Naive thymus-derived CD4-positive, alpha-beta T cell (primary cell): ENCODE measurements at regions of chr11 and their contacts with region 1.

Region 1: DNA sequence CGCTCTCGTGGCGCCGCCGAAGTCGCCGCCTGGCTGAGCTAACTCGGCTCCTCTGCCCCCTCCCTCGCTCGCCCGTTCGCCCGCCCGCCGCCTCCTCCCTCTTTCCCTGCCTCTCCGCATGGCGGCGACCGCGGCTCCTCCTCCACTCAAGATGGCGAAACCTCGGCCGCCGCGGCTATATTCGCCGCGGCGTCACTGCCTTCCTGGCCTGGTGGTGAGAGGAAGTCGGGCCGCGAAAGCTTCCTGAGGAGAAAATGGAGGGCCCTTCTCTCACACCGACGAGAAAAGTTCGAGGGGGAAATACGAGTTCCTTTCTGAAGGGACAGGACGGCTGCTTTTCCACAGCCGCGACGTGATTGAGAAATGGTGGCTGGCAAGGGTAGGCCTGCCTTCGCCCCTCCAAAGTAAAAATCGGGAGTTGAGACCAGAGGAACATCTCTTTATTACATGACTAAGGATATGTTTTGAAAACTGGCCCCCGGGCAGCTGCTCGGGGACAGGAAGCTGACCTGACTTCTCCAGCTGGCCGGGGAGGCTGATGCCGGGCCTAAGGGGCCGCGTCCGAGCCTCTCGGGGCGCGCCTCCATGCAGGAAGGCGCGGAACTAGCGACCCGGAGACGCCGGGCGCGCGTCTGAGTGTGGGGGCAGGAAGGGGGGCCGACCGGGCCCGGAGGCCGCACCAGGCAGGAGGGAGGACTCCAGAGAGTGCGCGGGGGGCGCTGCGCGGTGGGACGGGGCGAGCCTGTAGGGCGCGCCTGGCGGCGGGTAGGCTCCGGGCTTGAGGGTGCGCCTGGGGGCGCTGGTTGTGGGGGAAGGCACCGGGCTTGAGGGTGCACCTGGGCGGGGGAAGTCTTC is at the start of gene DDX6:
- DNase-seq: peak; percentile 84 to 92 (median 89)
- ATAC-seq: peak; percentile 79
- H3K4me3 ChIP-seq: peak within 1 kb of the TSS; percentile 78
- H3K4me3 Mint-ChIP-seq: peak within 1 kb of the TSS; percentile 92 to 100 (median 98)
- H3K27ac ChIP-seq: peak within 1 kb of the TSS; percentile 99
- H3K27ac Mint-ChIP-seq: peak within 1 kb of the TSS; percentile 95 to 100 (median 99)
- H3K4me1 ChIP-seq: peaks cover 15 to 24% of the 10 kb centered on the region in 2 donors
- H3K4me1 Mint-ChIP-seq: peaks cover 20 to 38% (median 28%) of the 10 kb centered on the region in 7 donors
- H3K27me3 ChIP-seq: no peaks in the 10 kb centered on the region
- H3K27me3 Mint-ChIP-seq: no peaks in the 10 kb centered on the region
- total RNA-seq, gene DDX6: 154 to 346 (median 272) TPM

Region 2: GRCh38 chr11:118401151-118401878 is 390.0 kb before region 1 on chr11 and contains the start of gene ATP5MG:
- CTCF ChIA-PET with region 1: no interaction called
- POLR2A ChIA-PET with region 1: no interaction called
- intact Hi-C with region 1: loop called in 1 of 2 experiments (anchors 2 kb)
- DNase-seq: peak; percentile 83 to 96 (median 93)
- ATAC-seq: peak; percentile 71
- H3K4me3 ChIP-seq: peak within 1 kb of the TSS; percentile 79
- H3K4me3 Mint-ChIP-seq: peak within 1 kb of the TSS; percentile 97 to 99 (median 98)
- H3K27ac ChIP-seq: peak within 1 kb of the TSS; percentile 97
- H3K27ac Mint-ChIP-seq: peak within 1 kb of the TSS; percentile 97 to 100 (median 100)
- H3K4me1 ChIP-seq: peaks cover 37 to 58% of the 10 kb centered on the region in 2 donors
- H3K4me1 Mint-ChIP-seq: peaks cover 39 to 78% (median 71%) of the 10 kb centered on the region in 7 donors
- H3K27me3 ChIP-seq: no peaks in the 10 kb centered on the region
- H3K27me3 Mint-ChIP-seq: peaks cover 0 to 2% (median 0%) of the 10 kb centered on the region in 5 donors
- total RNA-seq, gene ATP5MG: 140 to 241 (median 154) TPM

Region 3: GRCh38 chr11:118689851-118690552 is 101.3 kb before region 1 on chr11:
- CTCF ChIA-PET with region 1: interaction called, 47 read pairs
- POLR2A ChIA-PET with region 1: interaction called, 82 read pairs
- intact Hi-C with region 1: loop called (anchors 1 to 2 kb)
- DNase-seq: peak; percentile 71 to 87 (median 82)
- ATAC-seq: peak; percentile 96
- H3K4me3 ChIP-seq: peak overlapping the region; percentile 73
- H3K4me3 Mint-ChIP-seq: peak overlapping the region; percentile 56 to 80 (median 74)
- H3K27ac ChIP-seq: peak overlapping the region; percentile 69
- H3K27ac Mint-ChIP-seq: peak overlapping the region in 8 of 9 donors; percentile 51 to 91 (median 72)
- H3K4me1 ChIP-seq: peaks cover 42 to 46% of the 10 kb centered on the region in 2 donors
- H3K4me1 Mint-ChIP-seq: peaks cover 34 to 58% (median 52%) of the 10 kb centered on the region in 7 donors
- H3K27me3 ChIP-seq: no peaks in the 10 kb centered on the region
- H3K27me3 Mint-ChIP-seq: peaks cover 0 to 23% (median 0%) of the 10 kb centered on the region in 5 donors

Region 4: DNA sequence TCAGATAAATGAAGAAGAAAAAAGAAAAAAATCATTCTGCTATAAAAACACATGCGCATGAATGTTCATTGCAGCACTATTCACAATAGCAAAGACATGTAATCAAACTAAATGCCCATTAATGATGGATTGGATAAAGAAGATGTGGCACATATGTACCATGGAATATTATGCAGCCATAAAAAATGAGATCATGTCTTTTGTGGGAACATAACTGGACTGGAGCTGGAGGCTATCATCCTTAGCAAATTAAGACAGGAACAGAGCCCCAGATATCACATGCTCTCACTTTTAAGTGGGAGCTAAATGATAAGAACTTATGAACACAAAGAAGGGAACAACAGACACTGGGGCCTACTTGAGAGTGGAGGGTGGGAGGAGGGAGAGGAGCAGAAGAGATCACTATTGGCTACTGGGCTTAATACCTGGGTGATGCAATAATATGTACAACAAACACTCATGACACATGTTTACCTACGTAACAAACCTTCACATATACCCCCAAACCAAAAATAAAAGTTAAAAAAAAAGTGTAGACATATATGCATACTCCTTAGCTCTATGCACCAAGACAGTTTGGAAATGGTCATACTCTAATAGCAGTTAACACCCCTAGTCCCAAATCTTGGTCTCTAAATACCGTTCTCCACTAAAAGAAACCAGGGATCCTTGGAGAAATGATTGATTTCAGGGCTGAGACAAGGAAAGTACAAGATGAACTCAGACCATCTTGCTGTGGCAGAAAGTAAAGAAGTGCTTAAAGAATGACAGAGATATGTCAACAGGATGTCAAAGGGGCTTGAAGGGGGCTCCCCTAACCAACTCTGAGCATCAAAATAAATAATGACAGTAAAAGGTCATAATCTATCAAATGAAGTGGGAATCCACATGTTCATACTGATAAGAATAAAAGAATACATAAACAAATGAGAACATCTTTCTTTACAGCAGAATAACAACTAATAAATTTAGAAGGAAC is 16.8 kb after region 1 on chr11:
- CTCF ChIA-PET with region 1: interaction called, 10 read pairs
- POLR2A ChIA-PET with region 1: interaction called, 55 read pairs
- intact Hi-C with region 1: no loop called
- DNase-seq: no peak
- ATAC-seq: no peak
- H3K4me3 ChIP-seq: no peak overlapping the region
- H3K4me3 Mint-ChIP-seq: no peak overlapping the region
- H3K27ac ChIP-seq: peak overlapping the region; percentile 11
- H3K27ac Mint-ChIP-seq: peak overlapping the region in 4 of 9 donors; percentile 58 to 79 (median 68)
- H3K4me1 ChIP-seq: no peaks in the 10 kb centered on the region
- H3K4me1 Mint-ChIP-seq: peaks cover 0 to 25% (median 14%) of the 10 kb centered on the region in 7 donors
- H3K27me3 ChIP-seq: no peaks in the 10 kb centered on the region
- H3K27me3 Mint-ChIP-seq: peaks cover 0 to 5% (median 0%) of the 10 kb centered on the region in 5 donors

Region 5: DNA sequence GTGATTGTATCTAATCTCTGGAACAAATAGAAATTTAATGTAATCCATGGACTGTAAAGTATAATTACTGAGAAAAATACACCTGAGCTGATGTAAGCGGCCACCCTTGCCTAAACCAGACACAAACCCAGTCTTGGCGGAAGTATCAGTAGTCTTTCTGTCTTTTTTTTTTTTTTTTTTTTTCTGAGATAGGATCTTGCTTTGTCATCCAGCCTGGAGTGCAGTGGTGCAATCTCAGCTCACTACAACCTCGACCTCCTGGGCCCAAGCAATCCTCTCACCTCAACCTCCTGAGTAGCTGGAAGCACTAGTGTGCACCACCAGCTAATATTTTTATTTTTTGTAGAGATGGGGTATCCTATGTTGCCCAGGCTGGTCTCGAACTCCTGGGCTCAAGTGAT is 86.8 kb after region 1 on chr11:
- CTCF ChIA-PET with region 1: interaction called, 30 read pairs
- POLR2A ChIA-PET with region 1: interaction called, 437 read pairs
- intact Hi-C with region 1: loop called (anchors 1 to 2 kb)
- DNase-seq: peak in 7 of 9 donors; percentile 36 to 65 (median 59)
- ATAC-seq: peak; percentile 28
- H3K4me3 ChIP-seq: peak overlapping the region; percentile 26
- H3K4me3 Mint-ChIP-seq: peak overlapping the region in 9 of 10 donors; percentile 40 to 86 (median 68)
- H3K27ac ChIP-seq: peak overlapping the region; percentile 80
- H3K27ac Mint-ChIP-seq: peak overlapping the region; percentile 95 to 100 (median 99)
- H3K4me1 ChIP-seq: peaks cover 63 to 81% of the 10 kb centered on the region in 2 donors
- H3K4me1 Mint-ChIP-seq: peaks cover 65 to 98% (median 92%) of the 10 kb centered on the region in 7 donors
- H3K27me3 ChIP-seq: no peaks in the 10 kb centered on the region
- H3K27me3 Mint-ChIP-seq: no peaks in the 10 kb centered on the region

Region 6: GRCh38 chr11:118928108-118928870 is 137.0 kb after region 1 on chr11:
- CTCF ChIA-PET with region 1: interaction called, 10 read pairs
- POLR2A ChIA-PET with region 1: interaction called, 76 read pairs
- intact Hi-C with region 1: loop called (anchors 1 kb)
- DNase-seq: peak; percentile 89 to 99 (median 97)
- ATAC-seq: peak; percentile 79
- H3K4me3 ChIP-seq: peak overlapping the region; percentile 81
- H3K4me3 Mint-ChIP-seq: peak overlapping the region; percentile 86 to 98 (median 95)
- H3K27ac ChIP-seq: peak overlapping the region; percentile 96
- H3K27ac Mint-ChIP-seq: peak overlapping the region; percentile 93 to 100 (median 99)
- H3K4me1 ChIP-seq: peaks cover 25 to 34% of the 10 kb centered on the region in 2 donors
- H3K4me1 Mint-ChIP-seq: peaks cover 30 to 56% (median 46%) of the 10 kb centered on the region in 7 donors
- H3K27me3 ChIP-seq: no peaks in the 10 kb centered on the region
- H3K27me3 Mint-ChIP-seq: peaks cover 0 to 2% (median 0%) of the 10 kb centered on the region in 5 donors

Region 7: DNA sequence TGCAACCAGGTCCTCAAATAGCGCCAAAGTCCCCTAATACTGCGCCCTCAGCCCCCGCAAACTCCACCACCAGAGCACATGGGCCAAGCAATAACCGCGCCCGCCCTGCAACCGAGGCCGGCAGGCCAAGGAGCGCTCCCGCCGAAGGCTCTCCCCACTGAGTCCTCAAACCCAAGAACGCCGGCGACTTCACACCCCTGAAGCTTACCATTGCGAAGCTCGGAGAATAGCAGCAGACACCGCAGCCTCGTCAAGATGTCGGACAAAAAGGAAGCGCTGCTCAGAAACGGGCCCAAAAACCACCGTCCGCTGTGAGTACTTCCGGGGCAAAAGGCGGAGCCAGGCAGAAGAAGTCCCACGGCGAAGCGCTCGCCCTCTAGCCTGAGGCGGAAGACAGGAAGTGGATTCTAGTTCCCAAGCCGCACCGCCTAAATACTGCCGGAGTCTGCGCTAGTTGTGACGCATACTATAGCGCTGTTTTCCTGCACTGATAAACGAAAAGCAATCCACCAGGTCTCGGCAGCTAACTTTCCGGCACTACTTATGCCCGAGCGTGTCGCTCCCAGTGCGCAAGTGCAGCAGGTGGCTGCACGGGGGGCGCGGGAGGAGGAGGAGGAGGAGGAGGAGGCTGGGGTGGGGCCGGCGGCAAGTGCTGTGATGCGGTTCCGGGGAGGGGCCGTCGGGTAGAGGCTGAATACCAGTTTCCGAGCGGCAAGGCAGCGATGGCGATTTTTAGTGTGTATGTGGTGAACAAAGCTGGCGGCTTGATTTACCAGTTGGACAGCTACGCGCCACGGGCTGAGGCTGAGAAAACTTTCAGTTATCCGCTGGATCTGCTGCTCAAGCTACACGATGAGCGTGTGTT is 227.0 kb after region 1 on chr11 and contains the starts of genes RPS25 and TRAPPC4:
- CTCF ChIA-PET with region 1: no interaction called
- POLR2A ChIA-PET with region 1: interaction called, 4 read pairs
- intact Hi-C with region 1: loop called in 1 of 2 experiments (anchors 1 kb)
- DNase-seq: peak; percentile 87 to 98 (median 96)
- ATAC-seq: peak; percentile 93
- H3K4me3 ChIP-seq: peak within 1 kb of the TSS; percentile 89
- H3K4me3 Mint-ChIP-seq: peak within 1 kb of the TSS; percentile 96 to 100 (median 98)
- H3K27ac ChIP-seq: peak within 1 kb of the TSS; percentile 98
- H3K27ac Mint-ChIP-seq: peak within 1 kb of the TSS; percentile 99 to 100 (median 100)
- H3K4me1 ChIP-seq: peaks cover 30 to 32% of the 10 kb centered on the region in 2 donors
- H3K4me1 Mint-ChIP-seq: peaks cover 21 to 75% (median 50%) of the 10 kb centered on the region in 7 donors
- H3K27me3 ChIP-seq: no peaks in the 10 kb centered on the region
- H3K27me3 Mint-ChIP-seq: no peaks in the 10 kb centered on the region
- total RNA-seq, gene RPS25: 1,535 to 3,042 (median 2,772) TPM
- total RNA-seq, gene TRAPPC4: 70.7 to 80.3 (median 77.8) TPM